Activated T-helper 2 cell treated with anti-CD3 and anti-CD28 coated beads, Interferon-gamma antibody, Interleukin-2, Interleukin-4, amounts not matched to agents 10 μg/mL and 5 μg/mL and 100 μg/mL, durations not matched to agents 14 hours and 24 hours and 36 hours (primary cell): ENCODE measurements at regions of chr16 and their contacts with region 1.

Region 1: DNA sequence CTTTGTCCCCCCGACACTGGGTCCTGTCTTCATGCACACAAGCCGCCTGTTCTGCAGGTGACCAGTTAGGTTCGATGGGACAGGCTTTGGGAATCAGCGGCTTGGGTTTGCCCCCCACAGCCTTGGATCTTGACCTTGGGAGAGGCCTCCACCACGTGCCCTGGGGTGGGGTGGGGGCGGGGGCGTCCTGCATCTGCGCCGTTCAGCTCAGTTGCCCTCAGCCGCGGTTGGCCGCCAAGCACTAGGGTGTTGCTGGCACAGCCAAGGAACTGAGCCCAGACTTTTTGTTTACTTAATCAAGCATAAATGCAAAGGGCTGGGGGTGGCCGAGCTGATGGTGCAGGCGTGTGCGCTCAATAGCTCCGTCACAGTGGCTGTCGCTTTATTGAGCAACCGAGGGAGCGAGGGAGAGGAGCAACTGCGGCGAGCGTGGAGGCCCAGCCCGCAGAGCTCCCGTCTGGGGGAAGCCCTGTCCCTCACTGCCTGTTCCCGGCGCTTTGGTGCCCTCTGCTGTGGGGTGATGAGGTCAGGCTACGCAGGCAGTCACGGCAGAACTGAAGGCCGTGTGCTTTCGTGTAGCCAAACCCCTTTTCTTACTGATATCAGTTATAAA is 33.9 kb downstream of the JPH3 start:
- DNase-seq: peak; percentile 62
- H3K4me3 Mint-ChIP-seq: peak overlapping the region; percentile 30
- H3K27ac Mint-ChIP-seq: no peak overlapping the region
- H3K4me1 Mint-ChIP-seq: peaks cover 7% of the 10 kb centered on the region
- H3K27me3 Mint-ChIP-seq: peaks cover 10% of the 10 kb centered on the region

Region 2: GRCh38 chr16:87324411-87325275 is 311.5 kb before region 1 on chr16:
- intact Hi-C with region 1: loop called (anchors 10 kb)
- DNase-seq: no peak
- H3K4me3 Mint-ChIP-seq: no peak overlapping the region
- H3K27ac Mint-ChIP-seq: no peak overlapping the region
- H3K4me1 Mint-ChIP-seq: peaks cover 4% of the 10 kb centered on the region
- H3K27me3 Mint-ChIP-seq: no peaks in the 10 kb centered on the region

Region 3: DNA sequence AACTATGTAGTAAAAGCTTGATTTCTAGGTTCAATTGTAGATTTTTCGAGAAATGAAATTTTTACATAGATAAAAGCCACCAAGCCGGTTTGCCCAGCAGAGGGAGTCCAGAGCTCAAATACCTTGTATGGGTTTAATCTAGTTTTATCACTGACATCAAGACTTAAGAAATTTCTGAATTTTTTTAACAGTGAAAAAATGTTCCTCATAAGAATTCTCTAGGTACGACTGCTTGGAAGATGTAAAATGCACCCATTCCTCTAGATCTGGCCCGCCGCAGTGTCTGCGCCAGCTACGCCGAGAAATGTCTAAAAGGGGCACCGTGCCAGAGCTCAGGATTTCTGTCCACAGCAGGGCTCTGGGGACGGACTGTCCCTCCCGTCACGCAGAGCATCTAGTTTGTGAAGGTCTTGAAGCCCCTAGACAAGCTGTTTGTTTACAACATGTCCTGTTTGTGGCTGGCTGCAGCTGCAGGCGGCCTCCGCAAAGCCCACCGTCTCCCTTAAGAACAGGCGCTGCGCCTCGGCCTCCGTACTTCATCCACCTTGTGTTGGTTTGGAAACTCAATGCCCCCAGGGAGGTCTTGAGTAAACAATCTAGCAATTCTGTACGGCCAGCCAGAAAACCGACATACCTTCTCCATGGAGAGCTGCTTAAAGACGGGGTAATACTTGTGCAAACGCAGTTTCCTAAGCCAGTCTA is 219.2 kb before region 1 on chr16:
- intact Hi-C with region 1: loop called (anchors 5 kb)
- DNase-seq: no peak
- H3K4me3 Mint-ChIP-seq: no peak overlapping the region
- H3K27ac Mint-ChIP-seq: no peak overlapping the region
- H3K4me1 Mint-ChIP-seq: no peaks in the 10 kb centered on the region
- H3K27me3 Mint-ChIP-seq: no peaks in the 10 kb centered on the region

Region 4: GRCh38 chr16:87550496-87550961 is 85.6 kb before region 1 on chr16:
- intact Hi-C with region 1: loop called (anchors 5 kb)
- DNase-seq: peak; percentile 32
- H3K4me3 Mint-ChIP-seq: no peak overlapping the region
- H3K27ac Mint-ChIP-seq: no peak overlapping the region
- H3K4me1 Mint-ChIP-seq: peaks cover 4% of the 10 kb centered on the region
- H3K27me3 Mint-ChIP-seq: peaks cover 11% of the 10 kb centered on the region

Region 5: GRCh38 chr16:87671221-87671620 is 35.0 kb after region 1 on chr16:
- intact Hi-C with region 1: no loop called
- DNase-seq: no peak
- H3K4me3 Mint-ChIP-seq: no peak overlapping the region
- H3K27ac Mint-ChIP-seq: no peak overlapping the region
- H3K4me1 Mint-ChIP-seq: no peaks in the 10 kb centered on the region
- H3K27me3 Mint-ChIP-seq: no peaks in the 10 kb centered on the region